ENCODE measurements at regions of chr11 and their contacts with region 1.

Region 1: DNA sequence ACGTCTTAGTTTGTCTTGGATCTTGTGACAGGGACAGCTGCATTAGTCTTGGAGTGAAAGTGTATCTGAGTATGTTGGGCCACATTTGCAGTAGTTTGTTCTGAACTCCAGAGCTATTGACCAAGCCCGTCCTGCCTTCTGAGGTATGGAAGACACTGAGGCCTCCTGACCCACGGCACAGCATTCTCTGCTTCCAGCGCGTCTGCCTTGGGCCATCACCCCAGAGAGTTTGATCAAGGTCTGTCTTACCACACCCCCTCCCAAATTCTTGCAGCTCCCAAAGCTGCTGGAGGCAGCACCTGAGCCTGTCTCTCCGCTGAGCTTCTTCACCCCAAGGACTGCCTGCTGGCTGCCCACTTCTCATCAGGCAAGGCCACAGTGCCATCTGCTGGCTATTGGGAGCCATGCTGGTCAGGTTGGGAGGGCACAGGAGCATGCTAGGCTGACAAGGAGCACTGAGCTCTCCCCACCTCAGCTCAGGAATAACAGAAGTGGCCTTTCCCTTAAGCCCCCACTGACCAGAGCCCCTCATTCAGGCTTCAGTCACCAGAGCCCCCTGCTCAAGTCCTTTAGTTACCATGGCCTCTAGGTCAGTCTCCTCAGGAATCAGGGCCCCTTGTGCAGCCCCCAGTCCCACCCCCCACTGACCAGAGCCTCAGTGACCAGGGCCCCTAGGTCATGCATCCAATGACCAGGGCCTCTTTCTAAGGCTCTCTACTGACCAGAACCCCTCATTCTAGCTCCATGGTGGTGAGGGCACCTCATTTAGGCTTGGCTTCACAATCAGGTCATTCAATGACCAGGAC is 27.2 kb upstream of the SMPD1 start:
- DNase-seq: peak; percentile 6
- H3K4me3 ChIP-seq: no peak overlapping the region
- H3K27ac ChIP-seq: peak overlapping the region in 1 of 4 donors; percentile 30
- H3K4me1 ChIP-seq: peaks cover 0 to 3% (median 0%) of the 10 kb centered on the region in 3 donors
- H3K27me3 ChIP-seq: no peaks in the 10 kb centered on the region
- CTCF ChIP-seq: peak; percentile 60 to 82 (median 72)
- POLR2A ChIP-seq: no peak

Region 2: DNA sequence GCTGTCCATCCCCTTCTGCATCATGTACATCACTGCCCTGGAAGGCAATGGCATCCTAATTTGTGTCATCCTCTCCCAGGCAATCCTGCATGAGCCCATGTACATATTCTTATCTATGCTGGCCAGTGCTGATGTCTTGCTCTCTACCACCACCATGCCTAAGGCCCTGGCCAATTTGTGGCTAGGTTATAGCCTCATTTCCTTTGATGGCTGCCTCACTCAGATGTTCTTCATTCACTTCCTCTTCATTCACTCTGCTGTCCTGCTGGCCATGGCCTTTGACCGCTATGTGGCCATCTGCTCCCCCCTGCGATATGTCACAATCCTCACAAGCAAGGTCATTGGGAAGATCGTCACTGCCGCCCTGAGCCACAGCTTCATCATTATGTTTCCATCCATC is 782.1 kb before region 1 on chr11:
- intact Hi-C with region 1: no loop called
- DNase-seq: no peak
- H3K4me3 ChIP-seq: no peak overlapping the region
- H3K27ac ChIP-seq: no peak overlapping the region
- H3K4me1 ChIP-seq: no peaks in the 10 kb centered on the region
- H3K27me3 ChIP-seq: no peaks in the 10 kb centered on the region
- CTCF ChIP-seq: no peak
- POLR2A ChIP-seq: no peak

Region 3: DNA sequence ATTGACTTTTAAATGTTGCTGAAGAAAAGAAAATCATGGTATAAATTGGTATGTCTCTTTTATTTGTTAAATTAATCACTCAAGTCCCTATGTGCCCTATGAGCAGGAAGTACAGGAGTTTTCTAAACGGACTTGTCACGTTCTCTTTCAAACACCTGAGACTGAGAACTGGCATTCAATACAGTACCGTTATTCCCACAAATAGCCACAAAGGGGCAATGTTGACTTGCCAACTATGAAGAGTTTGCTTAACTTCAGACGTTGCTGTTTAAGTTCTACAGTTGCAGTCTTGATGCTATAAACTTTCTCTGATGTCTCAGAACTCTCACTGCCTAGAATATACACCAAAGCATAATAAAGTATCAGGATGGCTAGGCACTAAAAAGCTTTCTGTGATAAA is 340.1 kb before region 1 on chr11:
- intact Hi-C with region 1: loop called (anchors 10 kb)
- DNase-seq: no peak
- H3K4me3 ChIP-seq: no peak overlapping the region
- H3K27ac ChIP-seq: no peak overlapping the region
- H3K4me1 ChIP-seq: no peaks in the 10 kb centered on the region
- H3K27me3 ChIP-seq: no peaks in the 10 kb centered on the region
- CTCF ChIP-seq: peak in 5 of 6 experiments; percentile 30 to 50 (median 32)
- POLR2A ChIP-seq: no peak